ENCODE measurements at regions of chr14 and their contacts with region 1.

Region 1: GRCh38 chr14:60064491-60065072 is 27.1 kb upstream of the PCNX4 start:
- DNase-seq: peak; percentile 59
- H3K4me3 ChIP-seq: no peak overlapping the region
- H3K27ac ChIP-seq: no peak overlapping the region
- H3K4me1 ChIP-seq: no peaks in the 10 kb centered on the region
- CTCF ChIP-seq: peak; percentile 91

Region 2: DNA sequence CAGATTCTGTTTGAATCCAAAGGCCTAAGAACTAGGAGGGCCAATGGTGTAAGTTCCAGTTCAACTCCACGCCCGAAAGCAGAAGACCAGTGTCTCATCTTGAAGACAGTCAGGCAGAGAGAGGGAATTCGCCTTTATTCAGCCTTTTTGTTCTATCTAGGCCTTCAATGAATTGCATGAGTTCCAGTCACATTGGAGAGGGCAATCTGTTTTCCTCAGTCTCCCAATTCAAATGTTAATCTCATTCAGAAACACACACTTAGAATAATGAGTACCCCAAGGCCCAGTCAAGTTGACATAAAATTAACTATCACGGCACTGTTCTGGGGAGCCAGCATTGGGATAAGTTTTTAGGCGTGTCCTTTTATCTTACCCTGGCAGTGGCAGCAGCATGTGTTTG is 355.5 kb after region 1 on chr14:
- CTCF ChIA-PET with region 1: no interaction called
- POLR2A ChIA-PET with region 1: no interaction called
- intact Hi-C with region 1: no loop called
- DNase-seq: no peak
- H3K4me3 ChIP-seq: no peak overlapping the region
- H3K27ac ChIP-seq: no peak overlapping the region
- H3K4me1 ChIP-seq: no peaks in the 10 kb centered on the region
- CTCF ChIP-seq: no peak

Region 3: GRCh38 chr14:60561845-60562746 is 497.5 kb after region 1 on chr14:
- CTCF ChIA-PET with region 1: no interaction called
- POLR2A ChIA-PET with region 1: interaction called, 3 read pairs
- intact Hi-C with region 1: loop called (anchors 5 kb)
- DNase-seq: peak; percentile 90
- H3K4me3 ChIP-seq: no peak overlapping the region
- H3K27ac ChIP-seq: no peak overlapping the region
- H3K4me1 ChIP-seq: peaks cover 78% of the 10 kb centered on the region
- CTCF ChIP-seq: peak; percentile 97

Measured in OCI-LY7 (cell line).